ENCODE measurements at regions of chr7 and their contacts with region 1.

Region 1: GRCh38 chr7:4700577-4701235 is 18.6 kb downstream of the FOXK1 start:
- DNase-seq: no peak
- H3K4me3 ChIP-seq: no peak overlapping the region
- H3K27ac ChIP-seq: no peak overlapping the region
- H3K4me1 ChIP-seq: no peaks in the 10 kb centered on the region
- H3K27me3 ChIP-seq: no peaks in the 10 kb centered on the region
- CTCF ChIP-seq: no peak

Region 2: GRCh38 chr7:4763794-4764185 is 63.1 kb after region 1 on chr7:
- CTCF ChIA-PET with region 1: no interaction called
- POLR2A ChIA-PET with region 1: interaction called, 11 read pairs
- intact Hi-C with region 1: no loop called
- DNase-seq: no peak
- H3K4me3 ChIP-seq: no peak overlapping the region
- H3K27ac ChIP-seq: no peak overlapping the region
- H3K4me1 ChIP-seq: no peaks in the 10 kb centered on the region
- H3K27me3 ChIP-seq: no peaks in the 10 kb centered on the region
- CTCF ChIP-seq: no peak

Region 3: DNA sequence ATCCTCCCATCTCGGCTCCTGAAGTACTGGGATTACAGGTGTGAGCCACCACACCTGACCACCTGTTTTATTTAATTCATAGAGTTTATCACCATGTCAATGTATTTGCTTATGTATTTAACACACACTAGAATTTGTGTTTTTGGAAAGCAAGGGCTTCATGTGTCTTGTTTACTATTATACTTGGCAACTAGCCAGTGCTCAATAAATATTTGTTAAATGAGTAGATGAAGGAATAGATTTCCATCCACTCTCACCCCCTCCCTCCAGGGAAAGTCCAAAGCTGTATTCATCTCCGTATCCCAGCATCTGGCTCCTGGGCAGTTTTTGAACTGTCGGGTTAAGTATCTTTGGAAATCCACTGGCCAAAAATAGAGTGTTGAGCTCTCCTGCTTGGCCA is 187.4 kb after region 1 on chr7:
- CTCF ChIA-PET with region 1: no interaction called
- POLR2A ChIA-PET with region 1: no interaction called
- intact Hi-C with region 1: no loop called
- DNase-seq: no peak
- H3K4me3 ChIP-seq: no peak overlapping the region
- H3K27ac ChIP-seq: no peak overlapping the region
- H3K4me1 ChIP-seq: no peaks in the 10 kb centered on the region
- H3K27me3 ChIP-seq: peaks cover 69% of the 10 kb centered on the region
- CTCF ChIP-seq: no peak

Region 4: GRCh38 chr7:5045558-5046396 is 345.1 kb after region 1 on chr7 and contains the start of gene RBAK:
- CTCF ChIA-PET with region 1: no interaction called
- POLR2A ChIA-PET with region 1: no interaction called
- intact Hi-C with region 1: no loop called
- DNase-seq: peak; percentile 83 to 88
- H3K4me3 ChIP-seq: peak within 1 kb of the TSS; percentile 83
- H3K27ac ChIP-seq: peak within 1 kb of the TSS; percentile 5; the same call in 1 of the 2 replicates
- H3K4me1 ChIP-seq: 0 out of 2 replicates have a peak, but pooled peaks cover 4% of the 10 kb centered on the region
- H3K27me3 ChIP-seq: no peaks in the 10 kb centered on the region
- CTCF ChIP-seq: no peak
- total RNA-seq, gene RBAK: 10.1 and 12.4 TPM in 2 replicates